CD4-positive, alpha-beta T cell (primary cell): ENCODE measurements at regions of chr6 and their contacts with region 1.

Region 1: DNA sequence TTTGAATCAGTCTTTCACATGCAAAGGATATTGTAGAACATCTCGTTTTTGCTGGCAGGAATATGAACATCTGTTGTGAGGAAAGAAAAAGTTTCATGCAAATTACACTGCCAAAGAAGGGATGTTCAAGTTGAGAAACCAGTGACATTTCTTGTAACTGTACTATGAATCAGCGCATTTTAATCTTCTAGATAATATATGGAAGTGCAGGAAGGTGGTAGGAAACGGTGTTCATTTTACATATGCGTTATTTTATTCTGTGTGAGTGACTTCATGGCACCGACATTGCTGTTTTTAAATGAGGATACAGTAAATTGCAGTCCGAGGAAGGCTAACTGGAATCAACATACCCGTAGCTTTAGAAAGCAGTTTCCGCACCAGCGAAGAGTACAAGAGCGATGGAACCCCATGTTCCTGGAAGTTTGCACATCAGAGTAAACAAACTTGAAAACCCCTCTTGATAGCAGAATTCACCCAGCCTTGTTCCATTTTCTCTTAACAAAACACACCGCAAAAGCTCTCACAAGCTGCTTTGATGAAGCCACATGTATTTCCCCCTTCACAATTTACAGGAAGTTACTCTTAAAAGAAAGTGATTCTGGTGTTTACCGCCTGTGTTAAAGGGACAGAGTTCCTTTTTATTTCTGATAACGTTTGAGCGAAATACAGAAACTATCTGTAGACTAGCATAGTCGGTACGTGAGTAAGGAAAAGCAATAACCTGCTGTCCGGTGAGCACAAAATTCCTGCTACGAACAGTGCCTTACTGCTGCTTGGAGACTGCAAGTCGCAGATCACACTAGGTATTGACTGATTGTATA is 11.5 kb downstream of the PRDM1 start:
- DNase-seq: peak in 12 of 14 experiments; percentile 15 to 94 (median 52)
- ATAC-seq: peak; percentile 58
- H3K4me3 ChIP-seq: peak overlapping the region; percentile 72
- H3K4me3 Mint-ChIP-seq: peak overlapping the region; percentile 90
- H3K27ac ChIP-seq: peak overlapping the region; percentile 53 to 70
- H3K27ac Mint-ChIP-seq: peak overlapping the region; percentile 95
- H3K4me1 ChIP-seq: peaks cover 28% of the 10 kb centered on the region
- H3K4me1 Mint-ChIP-seq: peaks cover 85% of the 10 kb centered on the region
- H3K27me3 ChIP-seq: no peaks in the 10 kb centered on the region
- H3K27me3 Mint-ChIP-seq: peaks cover 6% of the 10 kb centered on the region
- CTCF ChIP-seq: no peak

Region 2: GRCh38 chr6:105733565-105734162 is 364.0 kb before region 1 on chr6:
- CTCF ChIA-PET with region 1: no interaction called
- POLR2A ChIA-PET with region 1: no interaction called
- intact Hi-C with region 1: loop called in 1 of 2 experiments (anchors 5 kb)
- DNase-seq: peak in 3 of 14 experiments; percentile 56 to 68 (median 67)
- ATAC-seq: no peak
- H3K4me3 ChIP-seq: no peak overlapping the region
- H3K4me3 Mint-ChIP-seq: no peak overlapping the region
- H3K27ac ChIP-seq: no peak overlapping the region
- H3K27ac Mint-ChIP-seq: no peak overlapping the region
- H3K4me1 ChIP-seq: no peaks in the 10 kb centered on the region
- H3K4me1 Mint-ChIP-seq: peaks cover 13% of the 10 kb centered on the region
- H3K27me3 ChIP-seq: no peaks in the 10 kb centered on the region
- H3K27me3 Mint-ChIP-seq: no peaks in the 10 kb centered on the region
- CTCF ChIP-seq: peak; percentile 84

Region 3: GRCh38 chr6:106085984-106086813 is 11.4 kb before region 1 on chr6 and contains the start of gene PRDM1:
- CTCF ChIA-PET with region 1: interaction called, 7 read pairs
- POLR2A ChIA-PET with region 1: interaction called, 48 read pairs
- intact Hi-C with region 1: loop called in 1 of 2 experiments (anchors 1 kb)
- DNase-seq: peak; percentile 53 to 96 (median 68)
- ATAC-seq: peak; percentile 83
- H3K4me3 ChIP-seq: peak within 1 kb of the TSS; percentile 62
- H3K4me3 Mint-ChIP-seq: peak within 1 kb of the TSS; percentile 94
- H3K27ac ChIP-seq: peak within 1 kb of the TSS in 1 of 2 donors; percentile 49
- H3K27ac Mint-ChIP-seq: peak within 1 kb of the TSS; percentile 74
- H3K4me1 ChIP-seq: peaks cover 58% of the 10 kb centered on the region
- H3K4me1 Mint-ChIP-seq: peaks cover 80% of the 10 kb centered on the region
- H3K27me3 ChIP-seq: peaks cover 0 to 8% of the 10 kb centered on the region in 2 experiments
- H3K27me3 Mint-ChIP-seq: peaks cover 55% of the 10 kb centered on the region
- CTCF ChIP-seq: peak; percentile 14
- total RNA-seq, gene PRDM1: 69.9 to 83.4 TPM

Region 4: GRCh38 chr6:106141441-106142237 is 44.0 kb after region 1 on chr6:
- CTCF ChIA-PET with region 1: no interaction called
- POLR2A ChIA-PET with region 1: interaction called, 13 read pairs
- intact Hi-C with region 1: no loop called
- DNase-seq: peak in 4 of 14 experiments; percentile 37 to 72 (median 50)
- ATAC-seq: peak; percentile 55
- H3K4me3 ChIP-seq: no peak overlapping the region
- H3K4me3 Mint-ChIP-seq: peak overlapping the region; percentile 5
- H3K27ac ChIP-seq: peak overlapping the region in 1 of 2 donors; percentile 29
- H3K27ac Mint-ChIP-seq: peak overlapping the region; percentile 56
- H3K4me1 ChIP-seq: peaks cover 47% of the 10 kb centered on the region
- H3K4me1 Mint-ChIP-seq: peaks cover 47% of the 10 kb centered on the region
- H3K27me3 ChIP-seq: no peaks in the 10 kb centered on the region
- H3K27me3 Mint-ChIP-seq: no peaks in the 10 kb centered on the region
- CTCF ChIP-seq: no peak

Region 5: GRCh38 chr6:106194949-106195921 is 97.6 kb after region 1 on chr6:
- CTCF ChIA-PET with region 1: interaction called, 3 read pairs
- POLR2A ChIA-PET with region 1: interaction called, 14 read pairs
- intact Hi-C with region 1: loop called in 1 of 2 experiments (anchors 1 kb)
- DNase-seq: peak in 6 of 14 experiments; percentile 5 to 85 (median 54)
- ATAC-seq: peak; percentile 78
- H3K4me3 ChIP-seq: peak overlapping the region; percentile 13
- H3K4me3 Mint-ChIP-seq: peak overlapping the region; percentile 76
- H3K27ac ChIP-seq: peak overlapping the region in 1 of 2 donors; percentile 12
- H3K27ac Mint-ChIP-seq: peak overlapping the region; percentile 81
- H3K4me1 ChIP-seq: peaks cover 19% of the 10 kb centered on the region
- H3K4me1 Mint-ChIP-seq: peaks cover 41% of the 10 kb centered on the region
- H3K27me3 ChIP-seq: no peaks in the 10 kb centered on the region
- H3K27me3 Mint-ChIP-seq: no peaks in the 10 kb centered on the region
- CTCF ChIP-seq: no peak

Region 6: GRCh38 chr6:106216527-106216926 is 118.9 kb after region 1 on chr6:
- CTCF ChIA-PET with region 1: no interaction called
- POLR2A ChIA-PET with region 1: no interaction called
- intact Hi-C with region 1: no loop called
- DNase-seq: no peak
- ATAC-seq: no peak
- H3K4me3 ChIP-seq: no peak overlapping the region
- H3K4me3 Mint-ChIP-seq: no peak overlapping the region
- H3K27ac ChIP-seq: no peak overlapping the region
- H3K27ac Mint-ChIP-seq: no peak overlapping the region
- H3K4me1 ChIP-seq: no peaks in the 10 kb centered on the region
- H3K4me1 Mint-ChIP-seq: peaks cover 13% of the 10 kb centered on the region
- H3K27me3 ChIP-seq: no peaks in the 10 kb centered on the region
- H3K27me3 Mint-ChIP-seq: no peaks in the 10 kb centered on the region
- CTCF ChIP-seq: no peak

Region 7: DNA sequence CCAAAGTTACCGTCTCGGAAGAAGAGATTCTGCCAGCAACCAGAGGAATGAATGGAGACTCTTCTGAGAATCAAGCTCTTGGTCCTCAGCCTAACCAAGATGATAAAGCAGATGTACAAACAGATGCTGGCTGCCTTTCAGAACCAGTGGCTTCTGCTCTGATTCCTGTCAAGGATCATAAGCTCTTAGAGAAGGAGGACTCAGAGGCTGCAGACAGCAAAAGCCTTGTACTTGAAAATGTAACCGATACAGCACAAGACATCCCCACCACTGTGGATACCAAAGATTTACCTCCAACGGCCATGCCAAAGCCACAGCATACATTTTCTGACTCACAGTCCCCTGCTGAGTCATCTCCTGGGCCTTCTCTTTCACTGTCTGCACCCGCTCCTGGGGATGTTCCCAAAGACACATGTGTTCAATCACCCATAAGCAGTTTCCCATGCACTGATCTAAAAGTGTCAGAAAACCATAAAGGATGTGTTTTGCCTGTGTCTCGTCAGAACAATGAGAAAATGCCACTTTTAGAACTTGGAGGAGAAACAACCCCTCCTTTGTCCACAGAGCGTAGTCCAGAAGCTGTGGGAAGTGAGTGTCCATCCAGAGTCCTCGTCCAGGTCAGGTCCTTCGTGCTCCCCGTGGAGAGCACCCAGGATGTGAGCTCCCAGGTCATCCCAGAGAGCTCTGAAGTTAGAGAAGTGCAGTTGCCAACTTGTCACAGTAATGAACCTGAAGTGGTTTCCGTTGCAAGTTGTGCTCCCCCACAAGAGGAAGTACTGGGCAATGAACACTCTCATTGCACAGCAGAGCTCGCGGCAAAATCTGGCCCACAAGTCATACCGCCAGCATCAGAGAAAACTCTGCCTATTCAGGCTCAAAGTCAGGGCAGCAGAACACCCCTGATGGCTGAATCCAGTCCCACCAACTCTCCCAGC is 422.1 kb after region 1 on chr6:
- CTCF ChIA-PET with region 1: no interaction called
- POLR2A ChIA-PET with region 1: no interaction called
- intact Hi-C with region 1: loop called (anchors 5 to 10 kb)
- DNase-seq: peak; percentile 52 to 90 (median 68)
- ATAC-seq: peak; percentile 47
- H3K4me3 ChIP-seq: peak overlapping the region; percentile 60
- H3K4me3 Mint-ChIP-seq: peak overlapping the region; percentile 94
- H3K27ac ChIP-seq: peak overlapping the region; percentile 87 to 92
- H3K27ac Mint-ChIP-seq: peak overlapping the region; percentile 96
- H3K4me1 ChIP-seq: peaks cover 54% of the 10 kb centered on the region
- H3K4me1 Mint-ChIP-seq: peaks cover 72% of the 10 kb centered on the region
- H3K27me3 ChIP-seq: no peaks in the 10 kb centered on the region
- H3K27me3 Mint-ChIP-seq: no peaks in the 10 kb centered on the region
- CTCF ChIP-seq: no peak